GM12878 (cell line): ENCODE measurements at regions of chr6 and their contacts with region 1.

Region 1: GRCh38 chr6:107982486-107982885 is 24.5 kb upstream of the SEC63 start:
- DNase-seq: no peak
- ATAC-seq: no peak
- H3K4me3 ChIP-seq: no peak overlapping the region
- H3K27ac ChIP-seq: no peak overlapping the region
- H3K4me1 ChIP-seq: no peaks in the 10 kb centered on the region
- H3K27me3 ChIP-seq: no peaks in the 10 kb centered on the region; a peak in 2 of 4 replicates
- CTCF ChIP-seq: no peak
- EP300 ChIP-seq: no peak
- POLR2A ChIP-seq: no peak
- RAD21 ChIP-seq: no peak

Region 2: GRCh38 chr6:107264357-107264840 is 718.1 kb before region 1 on chr6:
- CTCF ChIA-PET with region 1: no interaction called
- POLR2A ChIA-PET with region 1: no interaction called
- RAD21 ChIA-PET with region 1: no interaction called
- SMC1A ChIA-PET with region 1: no interaction called
- in situ Hi-C with region 1: no loop called
- intact Hi-C with region 1: no loop called
- DNase-seq: no peak
- ATAC-seq: no peak
- H3K4me3 ChIP-seq: no peak overlapping the region
- H3K27ac ChIP-seq: no peak overlapping the region
- H3K4me1 ChIP-seq: no peaks in the 10 kb centered on the region
- H3K27me3 ChIP-seq: no peaks in the 10 kb centered on the region
- CTCF ChIP-seq: no peak
- EP300 ChIP-seq: no peak
- POLR2A ChIP-seq: no peak
- RAD21 ChIP-seq: no peak

Region 3: DNA sequence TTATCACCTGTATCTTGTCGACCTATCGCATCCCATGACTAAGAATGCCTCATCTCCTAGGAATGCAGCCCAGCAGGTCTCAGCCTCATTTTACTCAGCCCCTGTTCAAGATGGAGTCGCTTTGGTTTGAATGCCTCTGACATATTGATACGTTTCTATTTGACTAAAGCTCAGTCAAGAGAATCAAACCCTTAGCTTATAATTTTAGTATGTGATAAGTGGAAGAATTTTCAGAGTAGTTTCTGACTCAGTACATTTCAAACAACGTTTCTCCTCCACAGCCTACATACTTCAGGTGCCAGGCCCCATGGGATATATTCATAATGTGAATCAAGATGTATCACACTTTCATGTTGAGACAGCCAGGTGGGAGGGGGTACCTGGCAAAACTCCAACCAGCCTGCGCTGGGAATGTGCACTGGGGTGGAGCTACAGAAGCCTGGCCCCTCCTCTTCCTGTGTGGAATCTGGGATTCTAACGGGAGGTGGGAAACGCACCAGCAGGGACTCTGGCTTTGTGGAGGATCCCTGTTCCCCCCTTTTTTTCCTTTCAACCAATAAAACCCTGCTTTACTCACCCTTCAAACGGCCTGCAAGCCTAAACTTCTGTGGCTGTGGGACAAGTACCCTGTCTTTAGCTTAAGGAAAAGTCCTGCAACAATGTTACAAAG is 17.7 kb before region 1 on chr6:
- CTCF ChIA-PET with region 1: interaction called, 22 read pairs
- POLR2A ChIA-PET with region 1: no interaction called
- RAD21 ChIA-PET with region 1: no interaction called
- SMC1A ChIA-PET with region 1: interaction called, 4 read pairs
- in situ Hi-C with region 1: no loop called
- intact Hi-C with region 1: no loop called
- DNase-seq: no peak
- ATAC-seq: peak; percentile 46; the same call in 2 of the 3 replicates
- H3K4me3 ChIP-seq: no peak overlapping the region
- H3K27ac ChIP-seq: no peak overlapping the region
- H3K4me1 ChIP-seq: no peaks in the 10 kb centered on the region
- H3K27me3 ChIP-seq: no peaks in the 10 kb centered on the region
- CTCF ChIP-seq: no peak
- EP300 ChIP-seq: no peak
- POLR2A ChIP-seq: no peak
- RAD21 ChIP-seq: no peak

Region 4: DNA sequence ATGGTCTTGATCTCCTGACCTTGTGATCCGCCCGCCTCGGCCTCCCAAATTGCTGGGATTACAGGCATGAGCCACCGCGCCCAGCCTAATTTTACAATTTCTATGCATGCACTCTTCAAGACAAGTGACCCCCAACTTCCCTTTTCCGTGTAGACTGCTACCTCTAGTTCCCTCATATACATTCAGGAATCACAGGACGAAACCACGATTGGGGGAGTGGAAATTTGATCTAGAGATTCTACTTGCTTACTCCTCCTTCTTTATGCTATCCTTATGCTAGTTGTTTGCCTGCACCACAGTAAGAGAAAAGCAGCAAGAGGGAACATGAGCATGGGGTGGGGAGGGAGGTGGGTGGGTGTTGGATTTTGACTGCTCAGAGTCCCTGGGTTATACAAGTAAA is 57.2 kb after region 1 on chr6:
- CTCF ChIA-PET with region 1: interaction called, 12 read pairs
- POLR2A ChIA-PET with region 1: no interaction called
- RAD21 ChIA-PET with region 1: no interaction called
- SMC1A ChIA-PET with region 1: no interaction called
- in situ Hi-C with region 1: no loop called
- intact Hi-C with region 1: no loop called
- DNase-seq: no peak
- ATAC-seq: no peak
- H3K4me3 ChIP-seq: no peak overlapping the region
- H3K27ac ChIP-seq: no peak overlapping the region
- H3K4me1 ChIP-seq: no peaks in the 10 kb centered on the region
- H3K27me3 ChIP-seq: no peaks in the 10 kb centered on the region
- CTCF ChIP-seq: no peak
- EP300 ChIP-seq: no peak
- POLR2A ChIP-seq: no peak
- RAD21 ChIP-seq: no peak

Region 5: DNA sequence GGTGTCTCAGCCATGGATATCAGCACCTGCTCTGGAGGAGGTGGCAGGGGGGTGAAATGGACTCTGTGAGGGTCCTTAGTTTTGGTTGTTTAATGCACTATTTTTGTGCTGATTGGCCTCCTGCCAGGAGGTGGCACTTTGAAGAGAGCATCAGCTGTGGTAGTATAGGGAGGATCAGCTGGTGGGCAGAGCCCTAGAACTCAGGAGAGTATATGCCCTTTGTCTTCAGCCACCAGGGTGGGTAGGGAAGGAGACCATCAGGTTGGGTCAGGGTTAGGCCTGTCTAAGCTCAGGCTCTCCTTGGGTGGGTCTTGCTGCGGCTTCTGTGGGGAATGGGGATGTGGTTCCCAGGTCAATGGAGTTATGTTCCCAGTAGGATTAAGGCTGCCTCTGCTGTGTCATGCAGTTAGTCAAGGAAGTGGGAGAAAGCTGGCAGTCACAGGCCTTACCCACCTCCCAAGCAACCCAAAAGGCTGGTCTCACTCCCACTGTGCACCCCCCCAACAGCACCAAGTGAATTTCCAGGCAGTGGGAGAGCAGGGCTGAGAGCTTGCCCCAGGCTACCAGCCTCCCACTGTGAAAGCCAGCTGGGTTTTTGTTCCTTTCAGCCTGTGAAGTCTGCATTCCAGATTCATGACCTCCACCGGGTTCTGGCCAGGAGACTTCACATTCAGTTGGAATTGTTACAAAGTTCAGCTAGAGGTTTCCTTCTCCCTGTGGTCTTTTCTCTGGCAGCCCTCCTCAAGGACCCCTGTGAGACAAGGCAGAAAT is 97.7 kb after region 1 on chr6:
- CTCF ChIA-PET with region 1: no interaction called
- POLR2A ChIA-PET with region 1: no interaction called
- RAD21 ChIA-PET with region 1: no interaction called
- SMC1A ChIA-PET with region 1: no interaction called
- in situ Hi-C with region 1: no loop called
- intact Hi-C with region 1: no loop called
- DNase-seq: no peak
- ATAC-seq: no peak
- H3K4me3 ChIP-seq: no peak overlapping the region
- H3K27ac ChIP-seq: no peak overlapping the region
- H3K4me1 ChIP-seq: peaks cover 2% of the 10 kb centered on the region
- H3K27me3 ChIP-seq: peaks cover 0 to 2% of the 10 kb centered on the region in 2 experiments; a peak in 2 of 4 replicates
- CTCF ChIP-seq: no peak
- EP300 ChIP-seq: no peak
- POLR2A ChIP-seq: no peak
- RAD21 ChIP-seq: no peak

Region 6: DNA sequence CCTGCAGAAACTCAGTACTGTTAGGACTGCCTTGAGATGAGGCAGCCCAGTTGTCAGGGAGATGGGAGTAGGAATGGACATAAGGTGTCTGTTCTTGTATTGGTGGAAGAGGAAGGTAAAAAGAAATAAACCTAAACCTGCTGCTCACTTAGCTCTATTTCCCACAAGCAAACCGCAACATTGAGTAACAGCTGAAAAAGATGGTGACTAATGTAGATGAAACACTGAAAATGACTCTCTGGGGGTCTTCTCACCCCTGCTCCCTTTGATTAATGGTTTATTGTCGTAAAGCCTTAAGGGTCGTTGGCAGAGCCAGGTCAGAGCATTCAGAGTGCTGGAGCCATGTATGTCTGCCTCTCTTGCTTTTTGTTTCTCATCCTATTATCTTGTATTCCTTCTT is 665.7 kb after region 1 on chr6:
- CTCF ChIA-PET with region 1: no interaction called
- POLR2A ChIA-PET with region 1: no interaction called
- RAD21 ChIA-PET with region 1: no interaction called
- SMC1A ChIA-PET with region 1: no interaction called
- in situ Hi-C with region 1: no loop called
- intact Hi-C with region 1: no loop called
- DNase-seq: no peak
- ATAC-seq: no peak
- H3K4me3 ChIP-seq: no peak overlapping the region
- H3K27ac ChIP-seq: no peak overlapping the region
- H3K4me1 ChIP-seq: no peaks in the 10 kb centered on the region
- H3K27me3 ChIP-seq: no peaks in the 10 kb centered on the region
- CTCF ChIP-seq: no peak
- EP300 ChIP-seq: no peak
- POLR2A ChIP-seq: no peak
- RAD21 ChIP-seq: no peak